ENCODE measurements at regions of chr10 and their contacts with region 1.

Region 1: DNA sequence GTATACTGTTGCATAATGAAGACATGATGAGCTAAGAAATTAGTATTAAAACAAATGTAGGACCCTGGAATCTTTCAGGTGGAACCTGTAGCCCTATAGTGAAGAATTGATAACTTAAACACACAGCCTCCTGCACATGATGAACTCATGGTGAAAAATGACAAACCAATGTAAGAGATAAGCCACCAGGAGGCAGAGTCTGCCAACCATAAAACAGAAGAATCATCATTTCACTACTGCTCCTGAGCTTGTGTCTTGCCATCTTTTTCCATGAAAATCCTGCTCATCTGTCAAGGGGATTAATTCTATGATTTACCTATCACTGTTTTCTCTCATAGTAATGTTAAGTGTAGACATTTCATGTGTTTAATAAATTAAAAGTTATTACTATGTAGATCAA is 363.9 kb downstream of the MALRD1 start:
- DNase-seq: no peak
- ATAC-seq: no peak
- H3K4me3 ChIP-seq: no peak overlapping the region
- H3K27ac ChIP-seq: no peak overlapping the region
- H3K4me1 ChIP-seq: no peaks in the 10 kb centered on the region
- H3K27me3 ChIP-seq: no peaks in the 10 kb centered on the region

Region 2: GRCh38 chr10:19310066-19310465 is 102.5 kb before region 1 on chr10:
- intact Hi-C with region 1: no loop called
- DNase-seq: no peak
- ATAC-seq: no peak
- H3K4me3 ChIP-seq: no peak overlapping the region
- H3K27ac ChIP-seq: no peak overlapping the region
- H3K4me1 ChIP-seq: no peaks in the 10 kb centered on the region
- H3K27me3 ChIP-seq: no peaks in the 10 kb centered on the region

Region 3: DNA sequence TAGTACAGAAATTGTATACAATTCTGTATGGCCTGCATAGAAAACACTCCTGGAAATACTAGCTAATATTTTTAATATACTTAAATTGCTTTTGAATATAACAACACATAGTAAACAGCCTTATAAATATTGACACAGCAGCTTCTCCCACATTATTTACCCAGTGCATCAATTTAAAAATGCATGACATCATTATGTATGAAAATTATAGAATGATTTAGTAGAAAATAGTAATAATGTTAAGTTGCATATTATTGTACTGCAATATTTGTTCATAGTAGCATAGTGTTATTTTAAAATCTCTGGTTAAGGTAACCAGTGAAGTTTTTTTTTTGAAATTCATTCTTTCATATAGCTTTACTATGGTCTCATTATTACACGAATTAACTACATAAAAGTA is 51.9 kb before region 1 on chr10:
- intact Hi-C with region 1: no loop called
- DNase-seq: no peak
- ATAC-seq: no peak
- H3K4me3 ChIP-seq: no peak overlapping the region
- H3K27ac ChIP-seq: no peak overlapping the region
- H3K4me1 ChIP-seq: no peaks in the 10 kb centered on the region
- H3K27me3 ChIP-seq: no peaks in the 10 kb centered on the region

Region 4: GRCh38 chr10:19788075-19788686 is 375.6 kb after region 1 on chr10:
- intact Hi-C with region 1: loop called in 1 of 4 experiments (anchors 10 kb)
- DNase-seq: no peak
- ATAC-seq: no peak
- H3K4me3 ChIP-seq: no peak overlapping the region
- H3K27ac ChIP-seq: no peak overlapping the region
- H3K4me1 ChIP-seq: no peaks in the 10 kb centered on the region
- H3K27me3 ChIP-seq: no peaks in the 10 kb centered on the region

Region 5: GRCh38 chr10:20768843-20769242 is 1356.3 kb after region 1 on chr10:
- intact Hi-C with region 1: loop called in 1 of 4 experiments (anchors 10 kb)
- DNase-seq: no peak
- ATAC-seq: no peak
- H3K4me3 ChIP-seq: no peak overlapping the region
- H3K27ac ChIP-seq: no peak overlapping the region
- H3K4me1 ChIP-seq: no peaks in the 10 kb centered on the region
- H3K27me3 ChIP-seq: no peaks in the 10 kb centered on the region